AG04450 (cell line): ENCODE measurements at regions of chr1 and their contacts with region 1.

Region 1: GRCh38 chr1:234963180-234963903 is 165.3 kb downstream of the TOMM20 start:
- DNase-seq: peak; percentile 86
- H3K4me3 ChIP-seq: peak overlapping the region; percentile 11; the same call in 1 of the 2 replicates
- H3K27ac ChIP-seq: peak overlapping the region; percentile 98
- H3K27me3 ChIP-seq: no peaks in the 10 kb centered on the region
- CTCF ChIP-seq: no peak

Region 2: GRCh38 chr1:234925440-234926263 is 37.7 kb before region 1 on chr1:
- CTCF ChIA-PET with region 1: no interaction called
- POLR2A ChIA-PET with region 1: interaction called, 12 read pairs
- DNase-seq: peak; percentile 97
- H3K4me3 ChIP-seq: no peak overlapping the region
- H3K27ac ChIP-seq: peak overlapping the region; percentile 94
- H3K27me3 ChIP-seq: no peaks in the 10 kb centered on the region
- CTCF ChIP-seq: no peak

Region 3: DNA sequence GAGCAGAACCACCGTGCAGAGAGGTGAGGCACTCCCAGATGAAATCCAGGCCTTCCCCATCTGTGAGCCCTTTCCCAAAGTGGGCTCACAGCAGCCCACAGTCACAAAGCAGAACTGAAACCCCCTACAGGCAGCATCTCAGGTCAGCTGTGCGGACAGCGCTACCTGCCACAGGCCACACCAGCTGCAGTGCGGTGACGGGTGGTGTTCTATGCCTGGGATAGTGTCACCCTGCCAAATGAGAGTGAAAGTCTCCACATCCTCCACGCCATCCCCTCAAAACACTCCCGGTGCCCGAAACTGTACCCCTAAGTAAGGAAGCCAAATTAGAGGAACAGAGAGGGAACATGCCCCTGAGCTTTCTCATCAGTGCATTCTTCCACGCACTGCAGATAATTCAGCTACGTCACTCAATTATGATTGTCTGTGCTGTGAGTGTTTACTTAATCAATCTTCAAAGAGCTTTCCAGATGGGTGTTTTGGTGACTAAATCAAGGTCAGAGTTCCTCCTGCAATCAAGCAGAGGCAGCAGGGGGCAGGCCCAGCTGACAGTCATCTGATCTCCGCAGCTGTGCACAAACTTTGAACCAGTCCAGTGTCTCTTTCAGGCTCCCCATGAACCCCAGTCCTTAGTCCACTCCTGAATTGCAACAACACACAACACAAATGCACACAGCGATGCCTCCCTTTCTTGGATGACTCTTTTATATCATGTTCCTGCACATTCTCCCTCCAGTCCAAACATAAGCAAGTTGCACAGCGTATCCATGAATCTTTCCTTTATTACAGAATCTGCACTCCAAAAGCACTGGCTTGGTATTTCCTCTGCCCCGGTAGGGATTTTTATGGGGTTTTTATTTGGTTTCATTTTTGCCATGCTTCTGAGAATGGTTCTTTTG is 15.3 kb after region 1 on chr1:
- CTCF ChIA-PET with region 1: no interaction called
- POLR2A ChIA-PET with region 1: interaction called, 10 read pairs
- DNase-seq: no peak
- H3K4me3 ChIP-seq: no peak overlapping the region
- H3K27ac ChIP-seq: peak overlapping the region; percentile 98
- H3K27me3 ChIP-seq: no peaks in the 10 kb centered on the region
- CTCF ChIP-seq: 0 out of 2 replicates have a peak, but pooled peaks have one; percentile 17

Region 4: GRCh38 chr1:235093696-235094592 is 130.6 kb after region 1 on chr1:
- CTCF ChIA-PET with region 1: interaction called, 12 read pairs
- POLR2A ChIA-PET with region 1: no interaction called
- DNase-seq: no peak
- H3K4me3 ChIP-seq: no peak overlapping the region
- H3K27ac ChIP-seq: no peak overlapping the region
- H3K27me3 ChIP-seq: no peaks in the 10 kb centered on the region
- CTCF ChIP-seq: peak; percentile 94